Activated CD4-positive, alpha-beta memory T cell treated with anti-CD3 and anti-CD28 coated beads, Interleukin-2, amount 10 ng/mL, durations not matched to agents 7 days and 5 days (primary cell): ENCODE measurements at regions of chr17 and their contacts with region 1.

Region 1: GRCh38 chr17:19766422-19767270 is 18.5 kb upstream of the ALDH3A1 start:
- DNase-seq: peak; percentile 79
- H3K4me3 Mint-ChIP-seq: no peak overlapping the region
- H3K27ac Mint-ChIP-seq: no peak overlapping the region
- H3K4me1 Mint-ChIP-seq: peaks cover 34% of the 10 kb centered on the region
- H3K27me3 Mint-ChIP-seq: peaks cover 4% of the 10 kb centered on the region

Region 2: GRCh38 chr17:19482576-19482975 is 284.1 kb before region 1 on chr17:
- CTCF ChIA-PET with region 1: no interaction called
- POLR2A ChIA-PET with region 1: no interaction called
- DNase-seq: no peak
- H3K4me3 Mint-ChIP-seq: no peak overlapping the region
- H3K27ac Mint-ChIP-seq: no peak overlapping the region
- H3K4me1 Mint-ChIP-seq: no peaks in the 10 kb centered on the region
- H3K27me3 Mint-ChIP-seq: peaks cover 2% of the 10 kb centered on the region

Region 3: DNA sequence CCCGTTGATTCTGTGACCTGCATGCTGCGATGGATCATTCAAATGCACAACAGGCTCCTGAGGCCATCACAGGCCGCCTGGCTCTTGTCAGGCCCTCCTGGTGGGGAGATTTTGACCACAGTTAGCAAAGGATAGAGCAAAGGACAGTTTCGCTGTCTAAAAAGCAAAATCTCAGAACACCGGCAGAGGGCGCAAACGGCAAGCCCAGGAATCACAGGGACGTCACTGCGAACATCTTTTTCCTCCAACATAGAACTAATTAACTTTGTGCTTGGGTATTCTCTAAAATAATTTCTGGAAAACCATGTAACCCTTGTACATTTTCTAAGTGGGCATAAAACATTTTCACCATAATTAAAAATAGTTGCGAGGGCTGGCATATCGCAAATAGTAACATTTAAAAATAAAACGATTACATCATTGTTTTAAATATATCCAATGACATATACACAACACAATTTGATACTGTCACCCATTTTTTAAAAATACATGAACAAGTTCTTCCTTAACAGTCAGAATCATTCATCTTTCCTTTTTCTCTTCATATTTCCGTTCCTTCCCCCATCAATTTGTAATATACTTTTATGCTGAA is 252.7 kb before region 1 on chr17:
- CTCF ChIA-PET with region 1: interaction called, 31 read pairs
- POLR2A ChIA-PET with region 1: interaction called, 3 read pairs
- DNase-seq: peak; percentile 66
- H3K4me3 Mint-ChIP-seq: no peak overlapping the region
- H3K27ac Mint-ChIP-seq: no peak overlapping the region
- H3K4me1 Mint-ChIP-seq: peaks cover 2% of the 10 kb centered on the region
- H3K27me3 Mint-ChIP-seq: no peaks in the 10 kb centered on the region

Region 4: GRCh38 chr17:19648475-19649406 is 117.9 kb before region 1 on chr17 and contains the start of gene ALDH3A2:
- CTCF ChIA-PET with region 1: interaction called, 18 read pairs
- POLR2A ChIA-PET with region 1: interaction called, 5 read pairs
- DNase-seq: peak; percentile 93
- H3K4me3 Mint-ChIP-seq: peak within 1 kb of the TSS; percentile 87
- H3K27ac Mint-ChIP-seq: peak within 1 kb of the TSS; percentile 81
- H3K4me1 Mint-ChIP-seq: peaks cover 41% of the 10 kb centered on the region
- H3K27me3 Mint-ChIP-seq: peaks cover 10% of the 10 kb centered on the region
- total RNA-seq, gene ALDH3A2: 19.7 to 23.1 TPM

Region 5: DNA sequence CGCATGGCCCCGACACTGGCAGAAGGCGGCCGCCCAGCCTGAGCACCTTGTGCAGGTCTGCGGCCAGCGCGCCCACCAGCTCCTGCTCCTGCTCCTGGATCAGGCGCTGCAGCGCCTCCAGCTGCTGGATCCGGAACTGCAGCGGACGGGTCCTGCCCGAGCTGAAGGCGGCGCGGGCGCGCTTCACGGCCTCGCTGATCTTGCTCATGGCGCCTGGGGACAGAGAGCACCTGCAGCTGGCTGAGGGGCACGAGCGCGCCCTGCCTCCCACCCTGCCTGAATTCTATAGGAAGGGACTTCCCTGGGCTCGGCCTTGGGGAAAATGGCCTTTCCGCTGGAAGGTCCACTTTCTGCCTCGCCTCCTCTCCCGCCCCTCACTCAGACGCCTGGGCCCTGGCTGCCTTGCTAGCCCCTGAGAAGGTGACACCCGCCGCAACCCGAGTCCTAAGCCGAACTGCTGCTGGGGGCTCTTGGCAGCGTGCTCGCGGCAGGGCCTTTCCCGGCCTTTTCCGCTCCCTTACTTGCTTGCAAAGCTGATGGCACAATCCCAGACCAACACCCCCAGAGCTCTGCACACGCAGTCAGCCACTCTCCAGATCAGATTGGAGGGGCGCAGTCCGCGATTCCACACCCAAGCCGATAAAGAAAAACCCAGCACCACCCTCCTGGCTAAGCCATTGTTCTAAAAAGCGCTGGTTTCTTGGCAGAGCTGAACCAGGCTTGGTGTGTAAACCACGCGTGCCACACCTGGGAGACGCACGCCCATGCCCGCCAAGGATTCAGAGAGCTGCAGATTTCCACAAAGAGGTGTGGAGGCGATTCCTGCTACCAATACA is 21.5 kb before region 1 on chr17:
- CTCF ChIA-PET with region 1: interaction called, 12 read pairs
- POLR2A ChIA-PET with region 1: no interaction called
- DNase-seq: peak; percentile 82
- H3K4me3 Mint-ChIP-seq: no peak overlapping the region
- H3K27ac Mint-ChIP-seq: no peak overlapping the region
- H3K4me1 Mint-ChIP-seq: peaks cover 6% of the 10 kb centered on the region
- H3K27me3 Mint-ChIP-seq: peaks cover 12% of the 10 kb centered on the region

Region 6: DNA sequence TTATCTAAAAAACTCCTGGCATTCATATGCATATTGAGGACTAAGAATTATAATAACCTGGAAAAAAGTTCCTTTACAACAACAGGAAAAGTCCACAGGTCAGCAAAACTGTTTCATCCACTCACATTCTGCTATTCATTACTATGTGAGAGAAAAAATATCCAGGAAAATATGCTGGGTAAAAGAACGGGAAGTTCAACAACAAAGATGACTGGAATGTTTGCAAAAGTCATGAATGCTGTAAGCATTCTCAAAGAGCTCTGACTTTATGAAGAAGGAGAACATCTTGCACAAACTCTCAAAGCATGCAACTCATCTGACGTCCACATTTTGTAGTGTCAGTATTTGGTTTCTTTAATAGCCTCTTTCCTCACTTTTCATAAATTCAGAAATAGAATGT is 38.4 kb after region 1 on chr17:
- CTCF ChIA-PET with region 1: no interaction called
- POLR2A ChIA-PET with region 1: no interaction called
- DNase-seq: no peak
- H3K4me3 Mint-ChIP-seq: no peak overlapping the region
- H3K27ac Mint-ChIP-seq: no peak overlapping the region
- H3K4me1 Mint-ChIP-seq: peaks cover 9% of the 10 kb centered on the region
- H3K27me3 Mint-ChIP-seq: no peaks in the 10 kb centered on the region